ENCODE measurements at regions of chr13 and their contacts with region 1.

Region 1: DNA sequence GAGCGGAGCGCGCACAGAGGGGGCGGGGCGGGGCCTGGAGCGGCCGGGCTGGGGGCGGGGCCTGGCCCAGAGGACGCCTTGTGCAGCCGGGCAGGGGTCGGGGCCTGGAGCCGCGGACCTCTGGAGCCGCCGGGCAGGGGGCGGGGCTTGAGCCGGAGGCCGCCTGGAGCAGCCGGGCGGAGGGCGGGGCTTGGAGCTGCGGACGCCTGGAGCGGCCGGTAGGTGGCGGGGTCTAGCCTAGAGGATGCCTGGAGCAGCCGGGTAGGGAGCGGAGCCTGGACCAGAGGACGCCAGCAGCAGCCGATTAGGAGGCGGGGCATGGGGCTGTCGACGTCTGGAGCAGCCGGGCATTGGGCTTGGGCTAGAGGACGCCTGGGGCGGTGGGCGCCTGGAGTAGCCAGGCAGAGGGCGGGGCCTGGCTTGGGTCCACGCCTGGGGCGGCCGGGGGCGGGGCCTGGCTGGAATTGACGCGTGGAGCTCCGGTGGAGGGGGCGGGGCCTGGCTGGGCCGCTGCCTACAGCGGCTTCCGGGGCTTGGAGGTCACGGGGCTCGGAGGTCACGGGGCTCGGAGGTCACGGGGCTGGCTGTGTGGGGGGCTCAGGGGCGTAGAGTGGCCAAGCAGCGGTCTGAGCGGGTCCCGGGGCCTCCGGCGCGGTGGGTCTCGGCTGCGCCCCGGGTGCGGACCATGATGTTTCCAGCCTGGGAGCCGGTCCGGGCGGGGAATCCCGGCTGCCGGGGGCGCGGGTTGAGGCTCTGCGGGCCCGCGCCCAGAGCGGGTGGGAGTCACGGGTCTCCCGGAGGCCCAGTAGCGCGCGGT is at the start of gene ANKRD10:
- DNase-seq: peak; percentile 99
- H3K4me3 ChIP-seq: peak within 1 kb of the TSS; percentile 86 to 100 (median 95)
- H3K27ac ChIP-seq: peak within 1 kb of the TSS; percentile 98
- H3K4me1 ChIP-seq: peaks cover 3 to 11% (median 7%) of the 10 kb centered on the region in 4 experiments; a peak in 6 of 7 replicates
- H3K27me3 ChIP-seq: no peaks in the 10 kb centered on the region
- CTCF ChIP-seq: peak; percentile 75 to 83 (median 81)
- EP300 ChIP-seq: no peak
- POLR2A ChIP-seq: peak; percentile 59 to 75
- RAD21 ChIP-seq: peak; percentile 63 to 70
- total RNA-seq, gene ANKRD10: 201 and 218 TPM in 2 replicates

Region 2: GRCh38 chr13:110698689-110699088 is 216.6 kb before region 1 on chr13:
- CTCF ChIA-PET with region 1: no interaction called
- POLR2A ChIA-PET with region 1: no interaction called
- DNase-seq: no peak
- H3K4me3 ChIP-seq: no peak overlapping the region
- H3K27ac ChIP-seq: no peak overlapping the region
- H3K4me1 ChIP-seq: peaks cover 0 to 3% (median under 1%) of the 10 kb centered on the region in 4 experiments; a peak in 1 of 7 replicates
- H3K27me3 ChIP-seq: no peaks in the 10 kb centered on the region
- CTCF ChIP-seq: no peak
- EP300 ChIP-seq: no peak
- POLR2A ChIP-seq: no peak
- RAD21 ChIP-seq: no peak

Region 3: GRCh38 chr13:110902370-110902769 is 12.9 kb before region 1 on chr13:
- CTCF ChIA-PET with region 1: interaction called, 7 read pairs
- POLR2A ChIA-PET with region 1: interaction called, 29 read pairs
- DNase-seq: no peak
- H3K4me3 ChIP-seq: no peak overlapping the region
- H3K27ac ChIP-seq: no peak overlapping the region
- H3K4me1 ChIP-seq: peaks cover 6 to 12% (median 9%) of the 10 kb centered on the region in 4 experiments; a peak in 5 of 7 replicates
- H3K27me3 ChIP-seq: no peaks in the 10 kb centered on the region
- CTCF ChIP-seq: no peak
- EP300 ChIP-seq: no peak
- POLR2A ChIP-seq: no peak
- RAD21 ChIP-seq: no peak